ENCODE measurements at regions of chr1 and their contacts with region 1.

Region 1: GRCh38 chr1:24201941-24202440 is 14.9 kb upstream of the IFNLR1 start:
- DNase-seq: peak; percentile 92
- H3K4me3 ChIP-seq: no peak overlapping the region
- H3K27ac ChIP-seq: peak overlapping the region in 2 of 4 donors; percentile 21 to 33
- H3K4me1 ChIP-seq: peaks cover 0 to 6% (median 4%) of the 10 kb centered on the region in 4 donors
- H3K27me3 ChIP-seq: no peaks in the 10 kb centered on the region
- CTCF ChIP-seq: peak; percentile 62 to 90 (median 74)
- EP300 ChIP-seq: no peak
- POLR2A ChIP-seq: no peak

Region 2: GRCh38 chr1:24289937-24290595 is 88.1 kb after region 1 on chr1:
- intact Hi-C with region 1: loop called (anchors 5 kb)
- DNase-seq: peak; percentile 95
- H3K4me3 ChIP-seq: no peak overlapping the region
- H3K27ac ChIP-seq: peak overlapping the region in 3 of 4 donors; percentile 30 to 62 (median 61)
- H3K4me1 ChIP-seq: peaks cover 0 to 28% (median 21%) of the 10 kb centered on the region in 4 donors
- H3K27me3 ChIP-seq: no peaks in the 10 kb centered on the region
- CTCF ChIP-seq: no peak
- EP300 ChIP-seq: peak in 1 of 4 donors; percentile 25
- POLR2A ChIP-seq: no peak

Region 3: GRCh38 chr1:24351918-24352627 is 150.1 kb after region 1 on chr1:
- intact Hi-C with region 1: no loop called
- DNase-seq: no peak
- H3K4me3 ChIP-seq: no peak overlapping the region
- H3K27ac ChIP-seq: no peak overlapping the region
- H3K4me1 ChIP-seq: no peaks in the 10 kb centered on the region
- H3K27me3 ChIP-seq: no peaks in the 10 kb centered on the region
- CTCF ChIP-seq: no peak
- EP300 ChIP-seq: no peak
- POLR2A ChIP-seq: no peak

Region 4: DNA sequence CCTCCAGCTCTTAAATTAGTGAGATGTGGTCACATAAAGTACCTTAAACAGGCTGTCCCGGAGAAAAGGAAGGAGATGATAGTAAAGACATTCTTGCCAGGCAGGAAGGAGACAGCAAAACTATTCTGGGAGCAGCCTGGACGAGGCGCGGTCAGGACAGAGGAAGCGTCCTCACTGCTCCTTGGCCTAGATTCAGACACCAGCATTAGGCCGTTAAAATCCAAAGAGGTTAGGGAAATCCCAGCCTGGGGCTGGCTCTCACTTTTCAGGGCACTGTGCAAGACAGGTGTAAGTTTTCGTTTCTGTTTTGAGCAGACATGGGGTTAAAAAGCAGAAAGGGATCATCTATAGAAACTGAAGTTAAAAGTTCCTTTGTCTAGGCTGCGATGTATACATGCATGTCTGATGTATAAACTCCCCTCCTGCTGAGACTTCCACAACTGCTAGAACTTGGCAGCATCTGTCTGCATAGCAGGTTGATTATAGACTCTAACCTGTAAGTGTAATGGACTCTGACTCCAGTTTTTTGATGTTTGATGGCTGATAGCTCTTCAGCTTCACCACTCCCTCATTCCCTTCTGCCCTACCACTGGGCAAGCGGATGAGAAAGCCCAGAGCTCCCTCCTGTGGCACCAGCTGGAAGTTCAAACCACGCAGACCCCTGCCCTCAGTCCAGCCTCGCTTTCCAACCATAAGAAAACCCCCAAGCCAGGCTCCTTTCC is 190.1 kb after region 1 on chr1:
- intact Hi-C with region 1: loop called (anchors 1 kb)
- DNase-seq: peak; percentile 83
- H3K4me3 ChIP-seq: peak overlapping the region in 2 of 4 donors; percentile 22 to 27
- H3K27ac ChIP-seq: peak overlapping the region; percentile 75 to 84 (median 84)
- H3K4me1 ChIP-seq: peaks cover 3 to 27% (median 24%) of the 10 kb centered on the region in 4 donors
- H3K27me3 ChIP-seq: no peaks in the 10 kb centered on the region
- CTCF ChIP-seq: peak; percentile 53 to 84 (median 69)
- EP300 ChIP-seq: no peak
- POLR2A ChIP-seq: no peak

Region 5: DNA sequence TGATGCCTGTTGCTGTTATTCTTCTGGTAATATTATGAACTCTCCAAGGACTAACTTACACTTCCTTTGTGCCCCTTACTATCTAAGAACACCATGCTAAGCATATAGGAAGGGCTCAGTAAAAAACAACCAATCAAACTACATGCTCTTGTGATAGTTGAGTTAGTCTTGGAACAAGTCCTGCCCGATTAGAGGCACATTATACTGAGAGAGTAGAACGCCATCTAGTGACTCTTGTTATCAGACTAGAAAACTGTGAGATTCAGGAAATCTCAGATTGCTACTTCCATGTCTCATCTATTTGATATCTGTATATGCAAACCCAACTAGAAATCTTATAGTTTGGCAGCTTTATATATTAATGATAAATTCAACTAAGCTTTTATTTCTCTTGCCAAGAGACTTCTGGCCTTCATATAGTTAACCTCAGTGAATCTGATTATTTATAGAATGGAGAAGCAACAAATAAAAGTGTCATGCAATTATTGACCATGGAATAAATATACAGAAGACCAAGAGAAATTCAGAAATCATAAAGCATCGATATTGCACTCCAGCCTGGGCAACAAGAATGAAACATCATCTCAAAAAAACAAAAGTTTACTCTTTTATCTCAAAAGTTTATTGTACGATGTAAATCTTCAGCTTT is 433.3 kb after region 1 on chr1:
- intact Hi-C with region 1: loop called (anchors 2 kb)
- DNase-seq: no peak
- H3K4me3 ChIP-seq: no peak overlapping the region
- H3K27ac ChIP-seq: no peak overlapping the region
- H3K4me1 ChIP-seq: no peaks in the 10 kb centered on the region
- H3K27me3 ChIP-seq: no peaks in the 10 kb centered on the region
- CTCF ChIP-seq: peak in 2 of 4 experiments; percentile 6 to 44
- EP300 ChIP-seq: no peak
- POLR2A ChIP-seq: no peak

Measured in sigmoid colon (tissue), 7 donors.